PC-9 (cell line): ENCODE measurements at regions of chr14 and their contacts with region 1.

Region 1: GRCh38 chr14:44961604-44962333 is at the starts of genes KLHL28 and TOGARAM1:
- DNase-seq: peak; percentile 94 to 99
- H3K4me3 ChIP-seq: peak within 1 kb of the TSS; percentile 65
- H3K27ac ChIP-seq: peak within 1 kb of the TSS; percentile 69
- H3K4me1 ChIP-seq: peaks cover 35% of the 10 kb centered on the region
- H3K27me3 ChIP-seq: no peaks in the 10 kb centered on the region
- CTCF ChIP-seq: no peak
- total RNA-seq, gene KLHL28: 10.3 and 10.5 TPM in 2 replicates
- total RNA-seq, gene TOGARAM1: 9.2 and 12.9 TPM in 2 replicates

Region 2: GRCh38 chr14:44820230-44820964 is 141.4 kb before region 1 on chr14:
- CTCF ChIA-PET with region 1: no interaction called
- POLR2A ChIA-PET with region 1: no interaction called
- intact Hi-C with region 1: no loop called
- DNase-seq: no peak
- H3K4me3 ChIP-seq: no peak overlapping the region
- H3K27ac ChIP-seq: no peak overlapping the region
- H3K4me1 ChIP-seq: no peaks in the 10 kb centered on the region
- H3K27me3 ChIP-seq: peaks cover 7% of the 10 kb centered on the region; the same call in 1 of the 2 replicates
- CTCF ChIP-seq: no peak

Region 3: GRCh38 chr14:45083971-45084722 is 122.4 kb after region 1 on chr14 and contains the start of gene PRPF39:
- CTCF ChIA-PET with region 1: no interaction called
- POLR2A ChIA-PET with region 1: interaction called, 3 read pairs
- intact Hi-C with region 1: loop called (anchors 1 kb)
- DNase-seq: peak; percentile 81 to 96
- H3K4me3 ChIP-seq: peak within 1 kb of the TSS; percentile 80
- H3K27ac ChIP-seq: peak within 1 kb of the TSS; percentile 60
- H3K4me1 ChIP-seq: peaks cover 30% of the 10 kb centered on the region
- H3K27me3 ChIP-seq: no peaks in the 10 kb centered on the region
- CTCF ChIP-seq: no peak
- total RNA-seq, gene PRPF39: 33.4 and 37.2 TPM in 2 replicates

Region 4: GRCh38 chr14:45089813-45090212 is 128.0 kb after region 1 on chr14:
- CTCF ChIA-PET with region 1: no interaction called
- POLR2A ChIA-PET with region 1: interaction called, 11 read pairs
- intact Hi-C with region 1: no loop called
- DNase-seq: no peak
- H3K4me3 ChIP-seq: no peak overlapping the region
- H3K27ac ChIP-seq: peak overlapping the region; percentile 37
- H3K4me1 ChIP-seq: peaks cover 37% of the 10 kb centered on the region
- H3K27me3 ChIP-seq: no peaks in the 10 kb centered on the region
- CTCF ChIP-seq: no peak

Region 5: GRCh38 chr14:45253068-45253753 is 291.4 kb after region 1 on chr14 and contains the start of gene MIS18BP1:
- CTCF ChIA-PET with region 1: no interaction called
- POLR2A ChIA-PET with region 1: no interaction called
- intact Hi-C with region 1: loop called (anchors 5 kb)
- DNase-seq: peak; percentile 93 to 94
- H3K4me3 ChIP-seq: peak within 1 kb of the TSS; percentile 94
- H3K27ac ChIP-seq: peak within 1 kb of the TSS; percentile 90
- H3K4me1 ChIP-seq: peaks cover 29% of the 10 kb centered on the region
- H3K27me3 ChIP-seq: no peaks in the 10 kb centered on the region
- CTCF ChIP-seq: peak; percentile 63
- total RNA-seq, gene MIS18BP1: 41.0 and 54.4 TPM in 2 replicates